Activated CD4-positive, alpha-beta memory T cell treated with anti-CD3 and anti-CD28 coated beads for 36 hours (primary cell): ENCODE measurements at regions of chr13 and their contacts with region 1.

Region 1: DNA sequence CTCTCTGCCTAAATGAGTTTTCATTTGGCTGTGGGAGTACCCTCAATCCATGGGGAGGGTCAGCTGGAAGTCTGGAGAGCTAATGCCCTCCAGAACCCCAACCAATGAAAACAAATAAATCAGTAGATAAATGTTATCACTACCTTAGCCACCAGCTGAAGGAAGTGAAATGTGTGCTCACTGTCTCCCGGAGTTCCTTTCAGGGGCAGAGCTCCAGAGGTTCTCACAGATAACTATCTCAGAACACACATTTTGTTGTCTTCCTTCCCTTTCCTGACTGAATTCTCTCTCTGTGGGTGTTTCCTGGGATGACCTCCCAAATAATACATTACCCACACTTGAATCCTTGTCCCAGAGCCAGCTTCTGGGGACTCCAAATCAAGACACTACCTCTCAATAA is 779.6 kb downstream of the DIAPH3 start:
- DNase-seq: no peak
- H3K4me3 Mint-ChIP-seq: no peak overlapping the region
- H3K27ac Mint-ChIP-seq: no peak overlapping the region
- H3K4me1 Mint-ChIP-seq: no peaks in the 10 kb centered on the region
- H3K27me3 Mint-ChIP-seq: peaks cover 18% of the 10 kb centered on the region

Region 2: GRCh38 chr13:59398127-59398526 is 14.0 kb after region 1 on chr13:
- CTCF ChIA-PET with region 1: no interaction called
- POLR2A ChIA-PET with region 1: no interaction called
- intact Hi-C with region 1: loop called (anchors 1 kb)
- DNase-seq: no peak
- H3K4me3 Mint-ChIP-seq: no peak overlapping the region
- H3K27ac Mint-ChIP-seq: no peak overlapping the region
- H3K4me1 Mint-ChIP-seq: no peaks in the 10 kb centered on the region
- H3K27me3 Mint-ChIP-seq: peaks cover 16% of the 10 kb centered on the region